ENCODE measurements at regions of chr15 and their contacts with region 1.

Region 1: GRCh38 chr15:36883713-36884517 is 216.4 kb downstream of the MEIS2 start:
- DNase-seq: peak; percentile 88 to 96
- H3K4me3 ChIP-seq: peak overlapping the region; percentile 32 to 38 (median 34)
- H3K27ac ChIP-seq: peak overlapping the region in 1 of 5 donors; percentile 77
- H3K4me1 ChIP-seq: peaks cover 13 to 59% (median 38%) of the 10 kb centered on the region in 4 donors
- H3K27me3 ChIP-seq: peaks cover 0 to 100% (median 77%) of the 10 kb centered on the region in 3 donors
- CTCF ChIP-seq: peak in 6 of 7 experiments; percentile 31 to 89 (median 80)
- EP300 ChIP-seq: no peak
- POLR2A ChIP-seq: no peak

Region 2: GRCh38 chr15:36722555-36722954 is 161.4 kb before region 1 on chr15:
- intact Hi-C with region 1: no loop called
- DNase-seq: no peak
- H3K4me3 ChIP-seq: no peak overlapping the region
- H3K27ac ChIP-seq: no peak overlapping the region
- H3K4me1 ChIP-seq: no peaks in the 10 kb centered on the region
- H3K27me3 ChIP-seq: no peaks in the 10 kb centered on the region
- CTCF ChIP-seq: no peak
- EP300 ChIP-seq: no peak
- POLR2A ChIP-seq: no peak

Region 3: DNA sequence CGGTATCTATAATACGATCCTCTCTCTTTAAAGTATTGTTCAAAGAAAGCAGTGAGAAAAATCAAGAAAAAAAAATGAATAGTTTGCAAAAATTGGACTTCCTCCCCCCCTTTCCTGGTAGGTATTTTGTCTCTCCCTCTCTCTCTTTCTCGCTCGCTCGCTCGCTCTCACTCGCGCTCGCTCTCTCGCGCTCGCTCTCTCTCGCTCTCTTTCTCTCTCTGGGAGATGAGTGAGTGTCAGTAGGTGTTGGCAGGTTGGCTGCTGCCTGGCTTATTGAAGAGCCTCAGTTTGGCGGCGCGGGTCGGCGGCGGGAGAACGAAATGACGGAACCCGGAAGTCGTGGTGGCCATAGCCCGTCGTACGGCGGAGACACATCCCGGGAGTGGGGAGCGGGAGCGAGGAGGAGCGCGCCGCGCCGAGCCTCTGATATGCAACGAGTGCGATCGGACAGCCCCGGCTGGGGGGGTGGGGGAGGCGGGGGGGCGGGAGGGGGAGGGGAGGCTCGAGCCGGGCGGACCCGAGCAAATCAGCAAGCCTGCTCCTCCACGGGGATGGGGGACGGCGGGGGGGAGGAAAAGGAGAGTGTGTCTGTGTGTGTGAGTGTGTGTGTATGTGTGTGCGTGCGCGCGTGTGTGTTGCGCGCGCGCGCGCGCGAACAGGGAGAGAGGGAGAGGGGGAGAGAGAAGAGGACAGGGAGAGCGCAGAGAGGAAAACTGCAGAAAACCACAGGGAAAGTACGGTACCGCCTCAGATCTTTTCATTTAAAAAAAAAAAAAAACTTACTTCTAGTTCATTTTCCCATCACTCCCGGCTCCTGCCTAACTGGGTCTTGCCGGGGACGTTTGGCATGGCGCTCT is 216.4 kb after region 1 on chr15 and contains the start of gene MEIS2:
- intact Hi-C with region 1: loop called (anchors 10 kb)
- DNase-seq: peak; percentile 87 to 97
- H3K4me3 ChIP-seq: peak within 1 kb of the TSS; percentile 60 to 79 (median 68)
- H3K27ac ChIP-seq: peak within 1 kb of the TSS; percentile 89 to 96 (median 94)
- H3K4me1 ChIP-seq: peaks cover 0 to 27% (median 17%) of the 10 kb centered on the region in 4 donors
- H3K27me3 ChIP-seq: peaks cover 0 to 66% (median 3%) of the 10 kb centered on the region in 3 donors
- CTCF ChIP-seq: no peak
- EP300 ChIP-seq: no peak
- POLR2A ChIP-seq: peak in 1 of 4 donors; percentile 40
- total RNA-seq, gene MEIS2: 9.6 to 77.7 (median 46.1) TPM

Region 4: DNA sequence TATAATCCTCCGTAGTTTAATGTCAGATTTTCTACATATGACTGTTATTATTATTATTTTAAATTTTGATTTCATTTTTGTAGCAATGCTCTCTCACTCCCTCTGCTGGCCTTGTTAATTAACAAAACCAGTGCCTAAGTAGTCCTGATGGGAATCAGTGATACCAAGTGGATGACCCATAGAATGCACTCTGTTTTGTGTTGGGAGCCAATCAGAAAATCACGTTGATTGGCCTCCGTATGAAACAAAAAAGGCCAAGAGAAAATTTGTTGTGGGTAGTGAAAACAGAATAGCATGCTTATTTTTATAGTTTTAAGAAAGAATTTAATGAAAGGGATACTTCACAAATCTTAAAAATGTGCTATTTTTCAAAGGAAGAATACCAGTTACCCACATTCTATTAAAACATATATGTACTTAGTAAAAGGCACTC is 250.8 kb after region 1 on chr15:
- intact Hi-C with region 1: loop called (anchors 10 kb)
- DNase-seq: peak in 1 of 2 donors; percentile 70
- H3K4me3 ChIP-seq: no peak overlapping the region
- H3K27ac ChIP-seq: no peak overlapping the region
- H3K4me1 ChIP-seq: peaks cover 0 to 11% (median 0%) of the 10 kb centered on the region in 4 donors
- H3K27me3 ChIP-seq: peaks cover 0 to 7% (median 0%) of the 10 kb centered on the region in 3 donors
- CTCF ChIP-seq: peak in 5 of 7 experiments; percentile 55 to 76 (median 60)
- EP300 ChIP-seq: no peak
- POLR2A ChIP-seq: no peak

Measured in stomach (tissue), 19 donors.